ENCODE measurements at regions of chr7 and their contacts with region 1.

Region 1: GRCh38 chr7:18345641-18346234 is 149.8 kb upstream of the HDAC9 start:
- DNase-seq: no peak
- H3K4me3 ChIP-seq: no peak overlapping the region
- H3K27ac ChIP-seq: no peak overlapping the region
- H3K4me1 ChIP-seq: peaks cover 0 to 53% (median 10%) of the 10 kb centered on the region in 6 donors
- H3K27me3 ChIP-seq: no peaks in the 10 kb centered on the region
- CTCF ChIP-seq: peak; percentile 45 to 86 (median 75)
- POLR2A ChIP-seq: no peak

Region 2: DNA sequence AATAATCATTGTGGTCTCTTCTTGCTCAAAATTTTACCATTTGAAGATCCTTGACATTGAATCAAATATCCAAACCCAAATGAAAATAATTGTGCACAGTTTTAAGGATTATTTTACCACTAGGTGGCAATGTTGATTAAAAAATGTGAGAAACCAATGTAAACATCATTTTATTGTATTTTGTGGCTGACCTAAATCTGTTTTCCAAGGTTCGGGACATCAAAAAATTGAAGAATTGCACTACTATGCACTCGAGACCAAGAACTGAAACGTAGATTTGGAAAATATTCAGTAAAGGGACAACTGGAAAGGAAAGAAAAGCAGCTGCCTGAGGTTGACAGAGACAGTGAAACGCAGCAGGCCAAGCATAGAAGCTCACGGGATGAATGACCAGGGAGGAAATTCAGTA is 664.8 kb before region 1 on chr7:
- intact Hi-C with region 1: loop called (anchors 10 kb)
- DNase-seq: no peak
- H3K4me3 ChIP-seq: peak overlapping the region in 1 of 8 donors; percentile 15
- H3K27ac ChIP-seq: peak overlapping the region in 2 of 8 donors; percentile 3 to 44
- H3K4me1 ChIP-seq: peaks cover 4 to 22% (median 13%) of the 10 kb centered on the region in 6 donors
- H3K27me3 ChIP-seq: no peaks in the 10 kb centered on the region
- CTCF ChIP-seq: peak in 9 of 11 experiments; percentile 28 to 63 (median 47)
- POLR2A ChIP-seq: no peak

Region 3: GRCh38 chr7:18583305-18583704 is 237.6 kb after region 1 on chr7:
- intact Hi-C with region 1: no loop called
- DNase-seq: no peak
- H3K4me3 ChIP-seq: no peak overlapping the region
- H3K27ac ChIP-seq: no peak overlapping the region
- H3K4me1 ChIP-seq: no peaks in the 10 kb centered on the region
- H3K27me3 ChIP-seq: no peaks in the 10 kb centered on the region
- CTCF ChIP-seq: no peak
- POLR2A ChIP-seq: no peak